ENCODE measurements at regions of chr17 and their contacts with region 1.

Region 1: GRCh38 chr17:19766422-19767270 is 18.5 kb upstream of the ALDH3A1 start:
- DNase-seq: peak in 1 of 2 donors; percentile 88
- H3K4me3 ChIP-seq: no peak overlapping the region
- H3K27ac ChIP-seq: peak overlapping the region; percentile 28
- H3K4me1 ChIP-seq: peaks cover 41% of the 10 kb centered on the region
- H3K27me3 ChIP-seq: no peaks in the 10 kb centered on the region
- CTCF ChIP-seq: peak; percentile 84 to 95 (median 94)
- POLR2A ChIP-seq: no peak

Region 2: GRCh38 chr17:19362277-19363113 is 404.2 kb before region 1 on chr17 and contains the start of gene B9D1:
- intact Hi-C with region 1: loop called (anchors 10 kb)
- DNase-seq: no peak
- H3K4me3 ChIP-seq: peak within 1 kb of the TSS; percentile 68 to 87
- H3K27ac ChIP-seq: peak within 1 kb of the TSS; percentile 88
- H3K4me1 ChIP-seq: peaks cover 11% of the 10 kb centered on the region
- H3K27me3 ChIP-seq: no peaks in the 10 kb centered on the region
- CTCF ChIP-seq: peak; percentile 99
- POLR2A ChIP-seq: peak in 1 of 2 donors; percentile 8
- total RNA-seq, gene B9D1: 50.6 TPM

Region 3: DNA sequence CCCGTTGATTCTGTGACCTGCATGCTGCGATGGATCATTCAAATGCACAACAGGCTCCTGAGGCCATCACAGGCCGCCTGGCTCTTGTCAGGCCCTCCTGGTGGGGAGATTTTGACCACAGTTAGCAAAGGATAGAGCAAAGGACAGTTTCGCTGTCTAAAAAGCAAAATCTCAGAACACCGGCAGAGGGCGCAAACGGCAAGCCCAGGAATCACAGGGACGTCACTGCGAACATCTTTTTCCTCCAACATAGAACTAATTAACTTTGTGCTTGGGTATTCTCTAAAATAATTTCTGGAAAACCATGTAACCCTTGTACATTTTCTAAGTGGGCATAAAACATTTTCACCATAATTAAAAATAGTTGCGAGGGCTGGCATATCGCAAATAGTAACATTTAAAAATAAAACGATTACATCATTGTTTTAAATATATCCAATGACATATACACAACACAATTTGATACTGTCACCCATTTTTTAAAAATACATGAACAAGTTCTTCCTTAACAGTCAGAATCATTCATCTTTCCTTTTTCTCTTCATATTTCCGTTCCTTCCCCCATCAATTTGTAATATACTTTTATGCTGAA is 252.7 kb before region 1 on chr17:
- intact Hi-C with region 1: loop called (anchors 2 kb)
- DNase-seq: no peak
- H3K4me3 ChIP-seq: no peak overlapping the region
- H3K27ac ChIP-seq: peak overlapping the region; percentile 63
- H3K4me1 ChIP-seq: no peaks in the 10 kb centered on the region
- H3K27me3 ChIP-seq: no peaks in the 10 kb centered on the region
- CTCF ChIP-seq: peak; percentile 84 to 95 (median 92)
- POLR2A ChIP-seq: no peak

Region 4: DNA sequence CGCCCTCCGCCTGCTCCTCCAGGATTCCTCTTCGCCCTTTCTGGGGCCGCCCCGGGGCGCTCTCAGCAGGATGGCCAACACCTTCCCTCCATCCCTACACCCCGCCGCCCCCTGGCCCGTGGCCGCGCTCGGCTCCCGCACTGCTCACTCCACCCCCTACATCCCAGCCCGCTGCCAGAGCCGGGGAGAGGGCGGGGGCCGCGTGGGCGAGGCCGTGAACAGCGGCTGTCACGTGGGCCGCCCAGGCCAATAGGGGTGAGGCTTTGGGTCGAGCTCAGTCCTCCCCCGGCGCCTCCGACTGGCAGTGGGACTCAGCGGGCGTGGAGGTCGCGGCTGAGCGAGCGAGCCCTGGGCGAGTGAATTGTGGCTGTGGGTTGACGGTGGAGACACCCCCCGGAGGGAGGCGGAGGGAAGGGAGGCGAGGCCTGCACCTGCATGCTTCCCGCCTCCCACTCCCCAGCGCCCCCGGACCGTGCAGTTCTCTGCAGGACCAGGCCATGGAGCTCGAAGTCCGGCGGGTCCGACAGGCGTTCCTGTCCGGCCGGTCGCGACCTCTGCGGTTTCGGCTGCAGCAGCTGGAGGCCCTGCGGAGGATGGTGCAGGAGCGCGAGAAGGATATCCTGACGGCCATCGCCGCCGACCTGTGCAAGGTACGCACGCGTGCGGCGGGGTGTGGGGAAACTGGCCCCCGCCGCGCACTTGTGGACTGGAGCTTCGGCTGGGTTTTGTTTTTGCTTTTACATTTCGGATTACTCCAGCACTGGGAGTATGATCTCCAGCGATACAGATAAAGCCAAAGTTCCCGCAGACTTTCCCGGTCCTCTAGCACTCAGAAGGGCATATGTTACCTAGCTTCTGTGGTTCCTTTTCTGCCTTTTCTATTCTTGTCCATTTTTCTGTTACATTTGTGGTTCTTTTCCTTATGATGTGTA is 117.9 kb before region 1 on chr17 and contains the start of gene ALDH3A2:
- intact Hi-C with region 1: loop called (anchors 10 kb)
- DNase-seq: peak in 1 of 2 donors; percentile 97
- H3K4me3 ChIP-seq: peak within 1 kb of the TSS; percentile 74 to 90
- H3K27ac ChIP-seq: peak within 1 kb of the TSS; percentile 92
- H3K4me1 ChIP-seq: peaks cover 61% of the 10 kb centered on the region
- H3K27me3 ChIP-seq: no peaks in the 10 kb centered on the region
- CTCF ChIP-seq: peak in 1 of 3 experiments; percentile 7
- POLR2A ChIP-seq: peak in 1 of 2 donors; percentile 84
- total RNA-seq, gene ALDH3A2: 268 TPM

Region 5: DNA sequence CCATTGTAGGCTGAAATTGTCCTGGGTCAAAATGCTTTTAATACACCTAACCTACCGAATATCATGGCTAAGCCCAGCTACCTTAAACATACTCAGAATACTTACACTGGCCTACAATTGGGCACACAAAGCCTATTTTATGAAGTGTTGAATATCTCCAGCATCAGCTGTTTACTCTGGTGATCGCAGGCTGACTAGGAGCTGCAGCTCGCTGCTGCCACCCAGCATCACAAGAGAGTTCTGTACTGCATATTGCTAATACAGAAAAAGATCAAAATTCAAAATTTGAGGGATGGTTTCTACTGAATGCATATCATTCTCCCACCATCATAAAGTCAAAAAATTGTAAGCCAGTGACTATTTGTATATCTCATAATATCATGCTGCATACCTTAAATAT is 45.8 kb after region 1 on chr17:
- intact Hi-C with region 1: no loop called
- DNase-seq: no peak
- H3K4me3 ChIP-seq: no peak overlapping the region
- H3K27ac ChIP-seq: no peak overlapping the region
- H3K4me1 ChIP-seq: no peaks in the 10 kb centered on the region
- H3K27me3 ChIP-seq: no peaks in the 10 kb centered on the region
- CTCF ChIP-seq: no peak
- POLR2A ChIP-seq: no peak

Region 6: GRCh38 chr17:19833914-19834313 is 67.3 kb after region 1 on chr17:
- intact Hi-C with region 1: no loop called
- DNase-seq: no peak
- H3K4me3 ChIP-seq: no peak overlapping the region
- H3K27ac ChIP-seq: no peak overlapping the region
- H3K4me1 ChIP-seq: no peaks in the 10 kb centered on the region
- H3K27me3 ChIP-seq: no peaks in the 10 kb centered on the region
- CTCF ChIP-seq: no peak
- POLR2A ChIP-seq: no peak

Region 7: DNA sequence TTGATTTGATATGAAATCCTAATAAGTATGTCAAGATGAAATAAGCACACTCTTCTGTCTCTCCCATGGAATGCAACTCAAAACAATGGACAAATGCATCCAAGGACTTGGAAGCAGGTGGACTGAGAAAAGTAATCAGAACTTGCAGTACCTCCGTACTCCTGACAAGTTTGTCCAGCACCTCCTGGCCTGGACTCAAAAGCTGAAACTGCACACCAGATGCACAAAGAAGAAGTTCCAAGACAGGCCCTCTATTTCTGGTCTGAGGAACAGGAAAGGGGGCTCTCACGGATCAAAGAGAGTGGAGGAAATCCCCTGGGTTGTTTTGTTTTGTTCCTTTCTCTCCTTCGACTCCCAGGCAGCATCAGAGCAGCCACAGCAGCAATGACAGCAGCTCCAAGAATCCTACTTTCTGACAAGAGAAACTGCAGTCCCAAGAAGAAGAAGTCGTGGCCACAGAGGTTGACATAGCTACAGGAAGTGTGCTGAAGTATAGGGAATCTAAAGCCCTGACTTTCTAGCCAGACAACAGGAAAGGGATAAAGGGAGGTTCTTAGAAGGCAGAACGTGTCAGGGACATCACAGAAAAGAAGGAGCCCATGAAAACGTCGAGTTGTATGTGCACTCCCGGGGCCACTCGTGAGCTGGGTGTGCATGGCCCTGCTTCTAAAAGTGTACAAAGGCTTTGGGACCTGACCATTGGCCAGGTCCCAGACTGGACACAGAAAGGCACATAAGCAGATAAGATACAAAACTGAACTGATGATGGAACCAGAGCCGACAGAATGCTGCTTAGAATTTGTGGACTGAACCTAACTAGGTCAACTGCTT is 181.7 kb after region 1 on chr17:
- intact Hi-C with region 1: no loop called
- DNase-seq: no peak
- H3K4me3 ChIP-seq: no peak overlapping the region
- H3K27ac ChIP-seq: no peak overlapping the region
- H3K4me1 ChIP-seq: peaks cover 29% of the 10 kb centered on the region
- H3K27me3 ChIP-seq: no peaks in the 10 kb centered on the region
- CTCF ChIP-seq: no peak
- POLR2A ChIP-seq: no peak